HepG2 (cell line): ENCODE measurements at regions of chr4 and their contacts with region 1.

Region 1: GRCh38 chr4:76251441-76252270 is at the start of gene FAM47E:
- DNase-seq: peak; percentile 57
- ATAC-seq: peak; percentile 99
- H3K4me3 ChIP-seq: peak within 1 kb of the TSS; percentile 39 to 69 (median 51)
- H3K27ac ChIP-seq: no peak within 1 kb of the TSS
- H3K4me1 ChIP-seq: peaks cover 13% of the 10 kb centered on the region
- H3K27me3 ChIP-seq: no peaks in the 10 kb centered on the region; a peak in 1 of 5 replicates
- CTCF ChIP-seq: peak; percentile 85
- EP300 ChIP-seq: no peak; a peak in 1 of 4 replicates
- POLR2A ChIP-seq: no peak
- RAD21 ChIP-seq: peak; percentile 96
- total RNA-seq, gene FAM47E: 0.29 and 0.33 TPM in 2 replicates

Region 2: GRCh38 chr4:76179398-76180318 is 72.0 kb before region 1 on chr4:
- CTCF ChIA-PET with region 1: no interaction called
- POLR2A ChIA-PET with region 1: no interaction called
- in situ Hi-C with region 1: no loop called
- intact Hi-C with region 1: loop called (anchors 2 kb)
- DNase-seq: peak; percentile 70
- ATAC-seq: peak; percentile 99
- H3K4me3 ChIP-seq: no peak overlapping the region
- H3K27ac ChIP-seq: no peak overlapping the region
- H3K4me1 ChIP-seq: no peaks in the 10 kb centered on the region
- H3K27me3 ChIP-seq: no peaks in the 10 kb centered on the region
- CTCF ChIP-seq: peak; percentile 91
- EP300 ChIP-seq: no peak
- POLR2A ChIP-seq: no peak
- RAD21 ChIP-seq: peak; percentile 84

Region 3: GRCh38 chr4:76293772-76294171 is 42.1 kb after region 1 on chr4:
- CTCF ChIA-PET with region 1: no interaction called
- POLR2A ChIA-PET with region 1: no interaction called
- in situ Hi-C with region 1: no loop called
- intact Hi-C with region 1: no loop called
- DNase-seq: no peak
- ATAC-seq: no peak
- H3K4me3 ChIP-seq: no peak overlapping the region
- H3K27ac ChIP-seq: no peak overlapping the region
- H3K4me1 ChIP-seq: no peaks in the 10 kb centered on the region
- H3K27me3 ChIP-seq: no peaks in the 10 kb centered on the region; a peak in 2 of 5 replicates
- CTCF ChIP-seq: no peak
- EP300 ChIP-seq: no peak
- POLR2A ChIP-seq: no peak
- RAD21 ChIP-seq: no peak